Common myeloid progenitor, CD34-positive (primary cell): ENCODE measurements at regions of chr9 and their contacts with region 1.

Region 1: DNA sequence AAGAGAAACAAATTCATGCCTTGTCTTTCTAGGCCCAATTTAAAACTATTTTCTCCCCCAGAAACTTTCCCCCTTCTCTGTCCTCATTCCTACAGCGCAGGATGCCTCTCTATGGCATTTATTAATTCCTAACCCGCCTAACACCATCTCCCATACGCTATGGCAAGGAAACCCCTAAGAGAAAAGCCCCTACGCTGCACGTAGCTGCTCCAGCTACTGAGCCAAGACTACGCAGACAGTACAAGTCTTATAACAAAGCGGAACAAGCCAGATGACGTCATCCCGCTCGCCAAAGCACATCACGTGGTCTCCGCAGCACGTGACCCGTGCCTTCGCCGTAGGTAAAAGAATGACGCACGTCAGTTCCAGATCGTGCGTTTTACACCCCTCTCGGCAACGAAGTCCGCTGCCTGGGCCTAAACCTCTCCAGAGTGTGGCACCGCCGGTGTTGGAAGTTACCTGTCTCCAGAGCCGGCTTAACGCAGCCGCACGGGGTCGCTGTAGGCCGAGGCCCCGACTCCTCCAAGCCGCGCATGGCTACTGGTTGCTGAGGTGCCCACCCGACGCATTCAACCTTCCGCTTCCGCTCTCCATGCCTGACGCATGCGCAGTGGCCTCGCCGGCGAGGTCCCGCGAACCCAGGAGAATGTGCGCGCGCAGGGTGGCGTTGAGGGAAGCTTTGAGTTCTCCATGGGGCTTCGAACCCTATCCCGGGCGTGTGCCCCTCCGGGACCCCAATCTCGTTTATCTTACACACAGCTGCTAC is at the start of gene TRMO:
- DNase-seq: peak; percentile 99
- H3K4me3 ChIP-seq: peak within 1 kb of the TSS; percentile 54 to 91 (median 78)
- H3K27ac ChIP-seq: peak within 1 kb of the TSS; percentile 97 to 99
- H3K4me1 ChIP-seq: peaks cover 34 to 75% (median 55%) of the 10 kb centered on the region in 4 experiments
- H3K27me3 ChIP-seq: no peaks in the 10 kb centered on the region

Region 2: DNA sequence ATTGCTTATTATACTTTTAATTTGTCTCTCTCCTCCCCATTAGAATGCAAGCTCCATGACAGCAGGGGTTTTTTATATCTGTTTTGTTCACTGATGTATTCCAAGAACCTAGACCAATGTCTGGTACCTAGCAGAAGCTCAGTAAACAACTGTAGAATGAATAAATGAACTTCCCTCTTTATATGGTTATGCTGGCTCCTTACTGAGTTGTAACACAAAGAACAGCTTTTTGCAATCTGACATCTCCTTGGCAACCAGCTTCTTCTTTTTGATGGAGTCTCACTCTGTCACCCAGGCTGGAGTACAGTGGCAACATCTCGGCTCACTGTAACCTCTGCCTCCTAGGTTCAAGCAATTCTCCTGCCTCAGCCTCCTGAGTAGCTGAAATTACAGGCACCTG is 13.4 kb before region 1 on chr9:
- CTCF ChIA-PET with region 1: interaction called, 72 read pairs
- POLR2A ChIA-PET with region 1: interaction called, 5 read pairs
- DNase-seq: peak in 2 of 3 donors; percentile 69 to 76
- H3K4me3 ChIP-seq: no peak overlapping the region
- H3K27ac ChIP-seq: no peak overlapping the region
- H3K4me1 ChIP-seq: peaks cover 19 to 41% (median 38%) of the 10 kb centered on the region in 4 experiments
- H3K27me3 ChIP-seq: no peaks in the 10 kb centered on the region

Region 3: DNA sequence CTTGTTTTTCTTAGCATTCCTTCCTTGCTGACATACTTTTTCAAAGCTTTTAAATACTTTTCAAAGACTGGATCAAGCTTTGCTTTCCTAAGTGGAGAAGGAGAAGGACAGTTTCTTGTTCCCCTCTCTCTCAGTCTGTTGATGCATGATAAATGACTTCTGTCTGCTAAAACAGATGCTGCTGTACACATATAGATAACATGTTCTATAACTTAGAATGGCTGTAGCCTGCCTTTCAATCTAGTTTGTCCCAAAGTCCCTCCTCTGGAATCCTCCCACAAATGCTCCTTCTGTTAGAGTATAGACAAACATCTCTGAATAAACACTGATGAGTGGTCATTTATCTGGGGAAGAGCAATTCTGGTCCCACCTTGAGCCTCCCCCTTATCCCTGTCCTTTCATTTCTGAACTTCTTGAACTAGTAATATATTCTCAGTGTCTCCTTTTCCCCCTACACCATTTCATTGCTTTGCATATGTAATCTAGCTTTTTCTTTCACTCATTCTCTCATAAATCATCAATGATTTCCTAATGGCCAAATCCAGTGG is 21.2 kb after region 1 on chr9:
- CTCF ChIA-PET with region 1: interaction called, 32 read pairs
- POLR2A ChIA-PET with region 1: interaction called, 4 read pairs
- DNase-seq: peak in 2 of 3 donors; percentile 59 to 81
- H3K4me3 ChIP-seq: peak overlapping the region in 1 of 7 experiments; percentile 2
- H3K27ac ChIP-seq: peak overlapping the region; percentile 35 to 92
- H3K4me1 ChIP-seq: peaks cover 42 to 64% (median 60%) of the 10 kb centered on the region in 4 experiments
- H3K27me3 ChIP-seq: no peaks in the 10 kb centered on the region

Region 4: DNA sequence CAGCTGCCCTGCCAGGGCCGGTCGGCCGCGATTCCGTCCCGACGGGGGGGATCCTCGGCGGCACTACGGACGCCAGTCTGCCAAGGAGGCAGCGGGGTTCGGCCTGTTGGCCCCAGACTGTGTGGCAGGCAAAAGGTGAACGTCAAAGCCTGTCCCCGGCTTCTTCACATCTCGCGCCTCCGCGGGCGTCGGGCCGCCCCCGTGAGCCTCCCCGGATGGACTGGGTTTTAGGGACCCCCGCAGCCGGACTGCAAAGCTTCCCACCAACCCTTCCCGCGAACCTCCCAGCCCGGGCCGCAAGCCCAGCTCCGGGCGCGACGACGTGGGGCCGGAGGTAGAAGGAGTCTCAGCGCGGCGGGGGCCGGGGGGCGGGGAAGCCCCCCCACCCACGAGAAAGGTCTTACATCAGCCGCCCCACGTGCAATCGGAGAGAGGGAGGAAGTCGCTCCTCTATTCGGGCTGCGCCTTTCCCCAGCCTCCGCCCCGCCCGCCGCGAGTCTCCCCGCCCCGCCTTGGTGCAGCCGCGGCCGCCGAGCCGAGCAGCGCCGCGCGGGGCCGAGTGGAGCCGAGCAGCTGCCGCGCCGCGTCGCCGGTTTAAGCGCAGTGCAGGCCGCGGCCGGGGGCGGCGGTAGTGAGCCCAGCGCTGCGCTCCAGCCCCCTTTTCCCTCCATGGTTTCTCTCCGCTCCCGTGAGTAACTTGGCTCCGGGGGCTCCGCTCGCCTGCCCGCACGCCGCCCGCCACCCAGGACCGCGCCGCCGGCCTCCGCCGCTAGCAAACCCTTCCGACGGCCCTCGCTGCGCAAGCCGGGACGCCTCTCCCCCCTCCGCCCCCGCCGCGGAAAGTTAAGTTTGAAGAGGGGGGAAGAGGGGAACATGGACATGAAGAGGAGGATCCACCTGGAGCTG is 60.8 kb after region 1 on chr9 and contains the start of gene ANP32B:
- CTCF ChIA-PET with region 1: interaction called, 54 read pairs
- POLR2A ChIA-PET with region 1: interaction called, 31 read pairs
- DNase-seq: peak; percentile 92 to 98 (median 96)
- H3K4me3 ChIP-seq: peak within 1 kb of the TSS; percentile 69 to 92 (median 83)
- H3K27ac ChIP-seq: peak within 1 kb of the TSS; percentile 85 to 93
- H3K4me1 ChIP-seq: peaks cover 14 to 74% (median 56%) of the 10 kb centered on the region in 4 experiments
- H3K27me3 ChIP-seq: no peaks in the 10 kb centered on the region

Region 5: GRCh38 chr9:97997330-97998276 is 75.5 kb after region 1 on chr9:
- CTCF ChIA-PET with region 1: interaction called, 11 read pairs
- POLR2A ChIA-PET with region 1: no interaction called
- DNase-seq: no peak
- H3K4me3 ChIP-seq: no peak overlapping the region
- H3K27ac ChIP-seq: peak overlapping the region in 1 of 2 experiments; percentile 36
- H3K4me1 ChIP-seq: peaks cover 14 to 21% (median 15%) of the 10 kb centered on the region in 4 experiments
- H3K27me3 ChIP-seq: no peaks in the 10 kb centered on the region

Region 6: DNA sequence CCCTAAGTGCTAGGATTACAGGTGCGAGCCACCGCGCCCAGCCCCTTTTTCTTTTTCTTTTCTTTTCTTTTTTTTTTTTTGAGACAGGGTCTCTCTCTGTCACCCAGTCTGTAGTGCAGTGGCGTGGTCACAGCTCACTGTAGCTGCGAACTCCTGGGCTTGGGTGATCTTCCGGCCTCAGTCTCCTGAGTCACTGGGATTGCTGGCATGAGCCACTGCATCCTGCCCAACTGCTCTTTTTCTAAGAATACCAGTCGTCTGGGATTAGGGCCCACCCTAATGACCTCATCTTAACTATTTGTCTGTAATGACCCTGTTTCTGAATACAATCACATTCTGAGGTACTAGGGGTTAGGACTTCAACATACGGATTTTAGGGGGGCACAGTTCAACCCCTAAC is 100.3 kb after region 1 on chr9:
- CTCF ChIA-PET with region 1: interaction called, 10 read pairs
- POLR2A ChIA-PET with region 1: no interaction called
- DNase-seq: no peak
- H3K4me3 ChIP-seq: no peak overlapping the region
- H3K27ac ChIP-seq: no peak overlapping the region
- H3K4me1 ChIP-seq: peaks cover 0 to 5% (median 0%) of the 10 kb centered on the region in 4 experiments
- H3K27me3 ChIP-seq: no peaks in the 10 kb centered on the region

Region 7: GRCh38 chr9:98074115-98074990 is 152.2 kb after region 1 on chr9:
- CTCF ChIA-PET with region 1: interaction called, 11 read pairs
- POLR2A ChIA-PET with region 1: interaction called, 6 read pairs
- DNase-seq: peak; percentile 42 to 62 (median 54)
- H3K4me3 ChIP-seq: no peak overlapping the region
- H3K27ac ChIP-seq: no peak overlapping the region
- H3K4me1 ChIP-seq: peaks cover 0 to 20% (median 13%) of the 10 kb centered on the region in 4 experiments
- H3K27me3 ChIP-seq: no peaks in the 10 kb centered on the region